Tibial artery (tissue), 4 donors: ENCODE measurements at regions of chr5 and their contacts with region 1.

Region 1: DNA sequence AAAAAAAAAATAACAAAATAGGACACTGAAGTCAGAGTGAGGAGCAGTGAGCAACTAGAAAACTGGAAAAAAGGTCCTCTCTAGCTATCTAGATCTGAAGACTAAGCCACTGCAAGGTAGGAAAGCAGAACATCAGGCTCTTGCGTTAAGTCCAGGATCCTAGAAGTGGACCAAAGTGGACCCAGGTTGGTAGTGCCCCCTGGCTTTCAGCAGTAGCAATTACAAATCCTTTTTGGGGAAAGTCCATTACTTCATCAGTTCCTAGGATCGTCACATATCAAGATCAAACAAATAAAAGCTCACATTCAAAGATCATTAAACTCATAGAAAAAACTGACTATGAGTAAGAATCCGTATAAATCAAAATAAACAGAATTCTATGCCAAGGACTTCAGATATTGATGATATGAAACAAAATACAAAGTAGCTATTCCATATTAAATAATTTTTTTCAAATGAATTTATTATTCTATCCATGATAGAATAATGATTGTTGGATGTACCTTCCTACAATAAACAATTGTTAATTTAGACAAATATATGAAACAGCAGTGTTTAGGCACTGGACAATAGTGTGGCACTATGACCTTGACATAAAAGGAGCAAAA is 6.5 kb upstream of the RICTOR start:
- DNase-seq: peak in 1 of 2 donors; percentile 27
- H3K4me3 ChIP-seq: no peak overlapping the region
- H3K27ac ChIP-seq: no peak overlapping the region
- H3K4me1 ChIP-seq: peaks cover 0 to 16% (median 2%) of the 10 kb centered on the region in 4 donors
- H3K27me3 ChIP-seq: no peaks in the 10 kb centered on the region
- CTCF ChIP-seq: peak; percentile 79 to 80

Region 2: GRCh38 chr5:38094889-38095288 is 985.8 kb before region 1 on chr5:
- intact Hi-C with region 1: no loop called
- DNase-seq: no peak
- H3K4me3 ChIP-seq: no peak overlapping the region
- H3K27ac ChIP-seq: no peak overlapping the region
- H3K4me1 ChIP-seq: no peaks in the 10 kb centered on the region
- H3K27me3 ChIP-seq: peaks cover 0 to 3% of the 10 kb centered on the region in 2 donors
- CTCF ChIP-seq: no peak

Region 3: GRCh38 chr5:38997591-38997990 is 83.1 kb before region 1 on chr5:
- intact Hi-C with region 1: loop called (anchors 5 kb)
- DNase-seq: no peak
- H3K4me3 ChIP-seq: no peak overlapping the region
- H3K27ac ChIP-seq: no peak overlapping the region
- H3K4me1 ChIP-seq: no peaks in the 10 kb centered on the region
- H3K27me3 ChIP-seq: no peaks in the 10 kb centered on the region
- CTCF ChIP-seq: no peak